Ascending aorta (tissue), 2 donors: ENCODE measurements at regions of chr1 and their contacts with region 1.

Region 1: GRCh38 chr1:244451951-244452795 is 464 bp upstream of the ADSS2 start:
- DNase-seq: peak; percentile 98 to 99
- H3K4me3 ChIP-seq: peak overlapping the region; percentile 89 to 95
- H3K27ac ChIP-seq: peak overlapping the region; percentile 96 to 98
- H3K4me1 ChIP-seq: peaks cover 0 to 23% of the 10 kb centered on the region in 2 donors
- H3K27me3 ChIP-seq: no peaks in the 10 kb centered on the region
- CTCF ChIP-seq: peak; percentile 32 to 61 (median 56)

Region 2: DNA sequence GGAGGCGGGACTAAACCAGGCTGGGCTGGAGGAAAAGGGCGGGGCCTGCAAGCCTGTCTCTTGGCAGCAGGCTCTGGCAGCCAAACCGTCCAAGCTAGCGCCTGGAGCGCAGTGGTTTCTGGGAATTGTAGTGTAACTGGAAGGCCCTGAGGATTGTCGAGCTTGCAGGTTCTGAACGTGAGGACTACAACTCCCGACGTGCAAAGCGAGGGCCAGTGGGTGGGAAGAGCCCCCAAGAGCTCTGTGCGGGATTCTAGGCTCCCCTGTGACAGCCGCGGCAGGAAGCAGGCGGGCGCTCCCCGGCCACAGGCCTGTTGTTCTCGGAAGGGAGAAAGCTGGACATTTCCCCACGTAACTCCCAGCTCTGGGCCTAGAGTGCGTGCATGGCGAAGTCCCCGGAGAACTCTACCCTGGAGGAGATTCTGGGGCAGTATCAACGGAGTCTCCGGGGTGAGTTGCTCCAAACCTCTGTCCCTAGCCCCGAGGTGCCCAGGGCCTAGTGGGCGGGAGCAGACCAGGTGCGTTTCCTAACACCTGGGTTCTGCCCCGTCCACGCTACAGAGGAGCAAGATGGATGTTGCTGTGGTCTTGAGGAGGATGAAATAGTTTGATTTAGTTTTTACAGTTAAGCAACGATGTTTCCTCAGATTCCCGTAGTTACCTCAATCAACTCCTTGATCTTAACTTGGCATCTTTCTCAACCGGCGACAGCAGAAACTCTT is 1196.2 kb before region 1 on chr1 and contains the start of gene SDCCAG8:
- intact Hi-C with region 1: loop called (anchors 5 kb)
- DNase-seq: peak; percentile 98 to 100
- H3K4me3 ChIP-seq: peak within 1 kb of the TSS; percentile 84 to 99
- H3K27ac ChIP-seq: peak within 1 kb of the TSS; percentile 97 to 99
- H3K4me1 ChIP-seq: peaks cover 3 to 22% of the 10 kb centered on the region in 2 donors
- H3K27me3 ChIP-seq: no peaks in the 10 kb centered on the region
- CTCF ChIP-seq: no peak
- total RNA-seq, gene SDCCAG8: 97.1 TPM

Region 3: DNA sequence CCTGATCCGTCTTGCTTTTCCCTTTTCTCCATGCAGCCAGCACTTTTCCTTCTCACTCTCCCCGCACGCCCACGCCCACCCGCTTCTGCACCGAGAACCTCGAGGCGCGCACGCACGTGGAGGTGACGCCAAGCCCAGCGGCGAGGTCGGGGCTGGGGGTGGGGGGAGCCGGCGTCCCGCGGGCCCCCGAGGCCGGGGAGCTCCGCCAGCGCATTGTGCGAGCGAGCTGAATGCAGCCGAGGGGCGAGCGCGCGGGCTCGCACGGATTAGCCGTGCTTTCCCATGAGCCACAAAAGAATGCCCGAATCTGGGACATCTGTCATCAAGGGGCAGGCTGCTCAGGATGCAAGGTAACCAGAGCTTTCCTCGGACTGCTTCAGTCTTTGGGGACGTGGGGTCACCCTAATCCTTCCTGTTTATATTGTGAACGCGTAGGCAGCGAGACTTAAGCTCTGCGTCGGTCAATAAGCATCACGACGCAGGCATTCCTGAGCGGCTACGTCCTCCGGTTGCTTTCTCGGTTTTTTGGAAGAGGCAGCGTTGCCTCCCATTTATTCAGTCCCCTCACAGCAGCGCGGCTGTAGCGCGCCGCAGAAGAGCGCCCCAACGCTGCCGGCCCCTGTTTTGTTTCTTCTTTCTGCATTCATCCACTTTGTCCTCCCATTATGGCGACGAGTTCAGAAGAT is 534.9 kb before region 1 on chr1:
- intact Hi-C with region 1: loop called (anchors 5 kb)
- DNase-seq: peak in 1 of 2 donors; percentile 67
- H3K4me3 ChIP-seq: peak overlapping the region; percentile 52 to 77
- H3K27ac ChIP-seq: peak overlapping the region in 1 of 2 donors; percentile 0
- H3K4me1 ChIP-seq: peaks cover 0 to 9% of the 10 kb centered on the region in 2 donors
- H3K27me3 ChIP-seq: no peaks in the 10 kb centered on the region
- CTCF ChIP-seq: no peak

Region 4: DNA sequence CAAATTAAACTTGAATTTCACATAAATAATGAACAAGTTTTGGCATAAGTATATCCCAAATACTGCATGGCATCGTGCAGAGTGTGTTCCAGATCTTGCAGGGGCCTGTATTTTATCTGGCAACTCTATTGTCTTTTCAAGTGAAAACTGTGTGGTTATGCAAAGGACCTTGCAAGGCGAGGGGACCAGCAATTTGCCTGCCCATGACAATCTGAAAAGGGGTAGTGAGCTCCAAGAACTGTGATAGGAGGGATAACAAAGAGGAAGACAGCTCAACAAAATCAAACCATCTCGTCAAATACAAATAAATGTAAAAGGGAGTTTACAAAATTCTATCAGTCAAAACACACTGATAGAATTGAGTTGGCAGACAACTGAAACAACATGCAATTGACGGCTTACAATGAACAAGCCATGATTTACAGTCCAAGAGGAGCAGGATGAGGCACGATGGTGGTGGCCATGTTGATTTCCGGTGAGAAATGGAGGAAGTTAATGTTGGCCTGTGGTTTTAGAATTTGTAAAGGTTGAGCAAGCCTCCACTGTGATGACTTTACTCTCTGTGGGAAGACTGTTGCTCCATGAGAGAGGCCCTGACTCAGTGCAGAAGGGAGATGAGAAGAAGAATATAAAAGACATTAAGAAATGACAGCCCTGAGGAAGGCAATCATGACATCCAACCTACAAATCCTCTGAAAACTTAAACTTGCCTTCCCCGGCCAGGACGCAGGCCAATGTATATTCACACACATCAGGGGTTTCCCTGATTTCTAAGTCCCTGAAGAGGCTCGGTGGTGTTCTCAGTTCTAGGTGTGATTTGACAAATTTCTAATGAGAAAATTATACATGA is 132.7 kb before region 1 on chr1:
- intact Hi-C with region 1: loop called (anchors 5 kb)
- DNase-seq: no peak
- H3K4me3 ChIP-seq: no peak overlapping the region
- H3K27ac ChIP-seq: no peak overlapping the region
- H3K4me1 ChIP-seq: peaks cover 3 to 14% of the 10 kb centered on the region in 2 donors
- H3K27me3 ChIP-seq: no peaks in the 10 kb centered on the region
- CTCF ChIP-seq: no peak

Region 5: DNA sequence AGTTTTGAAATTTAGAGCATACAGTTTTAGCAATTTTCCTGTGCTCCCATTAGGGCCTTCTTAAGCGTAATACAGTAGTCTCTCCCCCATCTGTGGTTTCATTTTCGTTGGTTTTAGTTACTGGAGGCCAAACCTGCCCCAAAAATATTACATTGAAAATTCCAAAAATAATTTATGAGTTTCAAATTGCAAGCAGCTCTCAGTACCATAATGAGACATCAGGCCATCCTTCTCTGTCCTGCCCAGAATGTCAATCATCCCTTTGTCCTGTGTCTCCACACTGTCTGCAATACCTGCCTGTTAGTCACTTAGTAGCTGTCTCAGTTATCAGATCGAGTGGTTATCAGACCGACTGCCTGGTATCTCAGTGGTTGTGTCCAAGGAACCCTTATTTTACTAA is 45.8 kb before region 1 on chr1:
- intact Hi-C with region 1: no loop called
- DNase-seq: no peak
- H3K4me3 ChIP-seq: no peak overlapping the region
- H3K27ac ChIP-seq: no peak overlapping the region
- H3K4me1 ChIP-seq: no peaks in the 10 kb centered on the region
- H3K27me3 ChIP-seq: no peaks in the 10 kb centered on the region
- CTCF ChIP-seq: no peak

Region 6: GRCh38 chr1:244652699-244653466 is 200.7 kb after region 1 on chr1 and contains the start of gene DESI2:
- intact Hi-C with region 1: loop called (anchors 2 kb)
- DNase-seq: peak; percentile 99 to 100
- H3K4me3 ChIP-seq: peak within 1 kb of the TSS; percentile 72 to 95
- H3K27ac ChIP-seq: peak within 1 kb of the TSS; percentile 93 to 99
- H3K4me1 ChIP-seq: peaks cover 0 to 25% of the 10 kb centered on the region in 2 donors
- H3K27me3 ChIP-seq: no peaks in the 10 kb centered on the region
- CTCF ChIP-seq: peak; percentile 45 to 58 (median 55)
- total RNA-seq, gene DESI2: 24.2 TPM

Region 7: DNA sequence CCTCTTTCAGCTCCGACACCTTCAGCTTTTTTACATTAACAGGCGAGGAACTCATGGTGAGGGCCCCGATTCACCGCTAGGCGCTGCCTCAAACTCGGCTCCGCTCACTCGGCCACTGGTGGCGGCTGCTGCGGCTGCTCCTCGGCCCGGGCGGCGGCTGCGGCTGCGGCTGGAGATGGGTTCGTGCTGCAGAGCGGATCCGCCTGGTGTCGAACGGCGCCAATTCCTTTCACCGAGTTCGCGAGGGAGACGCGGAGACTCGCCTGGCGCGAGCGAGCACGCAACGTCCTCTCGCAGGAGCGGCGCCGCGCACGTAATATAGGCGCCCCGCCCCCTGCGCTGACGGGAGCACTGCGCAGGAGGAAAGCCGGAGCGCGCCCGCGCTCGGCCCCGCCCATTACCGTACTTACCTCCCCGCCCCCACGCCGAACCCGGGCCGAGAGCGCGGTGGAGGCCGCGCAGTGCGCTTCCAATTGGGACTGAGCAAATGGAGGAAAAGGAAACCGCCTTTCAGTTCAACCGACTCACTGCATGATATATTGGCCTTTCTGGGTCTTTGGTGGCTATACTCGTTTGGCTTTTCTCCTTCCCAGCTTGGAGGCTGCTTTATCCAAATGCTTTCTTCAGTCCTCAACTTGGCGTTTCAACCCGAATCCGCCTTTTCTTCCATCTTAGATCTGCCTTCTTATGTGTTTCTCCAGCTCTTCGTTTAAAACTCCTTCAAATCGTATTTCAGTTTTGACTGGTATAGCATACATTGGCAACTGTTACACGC is 412.3 kb after region 1 on chr1 and contains the start of gene HNRNPU:
- intact Hi-C with region 1: loop called (anchors 2 kb)
- DNase-seq: peak; percentile 86 to 99
- H3K4me3 ChIP-seq: peak within 1 kb of the TSS; percentile 90 to 100
- H3K27ac ChIP-seq: peak within 1 kb of the TSS; percentile 99 to 100
- H3K4me1 ChIP-seq: peaks cover 11 to 33% of the 10 kb centered on the region in 2 donors
- H3K27me3 ChIP-seq: no peaks in the 10 kb centered on the region
- CTCF ChIP-seq: peak; percentile 18 to 44 (median 41)
- total RNA-seq, gene HNRNPU: 128 TPM